Activated B cell treated with CpG ODN at 0.5 μM for 24 hours (primary cell): ENCODE measurements at regions of chr6 and their contacts with region 1.

Region 1: DNA sequence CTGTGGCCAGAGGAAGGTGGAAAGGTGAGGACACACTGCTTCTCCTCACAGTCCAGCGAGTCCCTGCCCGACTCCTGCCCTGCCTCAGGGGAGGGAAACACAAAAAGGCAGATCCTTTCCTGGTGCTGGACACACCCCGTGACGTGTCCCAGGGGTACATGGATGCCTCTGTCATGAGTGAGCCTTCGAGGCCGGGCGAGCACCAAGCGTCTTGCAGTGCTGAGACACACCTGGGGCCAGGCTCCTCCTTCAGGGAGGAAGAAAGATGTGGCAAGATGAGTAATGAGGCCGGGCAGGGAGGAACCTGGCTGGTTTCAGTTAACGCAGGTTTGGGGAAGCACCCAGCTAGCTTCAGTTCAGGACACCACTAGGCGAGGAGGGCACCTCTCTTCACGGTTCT is 215.1 kb downstream of the LY86 start:
- DNase-seq: peak; percentile 56
- ATAC-seq: peak; percentile 85
- H3K4me3 Mint-ChIP-seq: peak overlapping the region; percentile 4
- H3K27ac Mint-ChIP-seq: peak overlapping the region; percentile 42
- H3K4me1 Mint-ChIP-seq: peaks cover 79% of the 10 kb centered on the region
- H3K27me3 Mint-ChIP-seq: no peaks in the 10 kb centered on the region
- CTCF ChIP-seq: no peak

Region 2: DNA sequence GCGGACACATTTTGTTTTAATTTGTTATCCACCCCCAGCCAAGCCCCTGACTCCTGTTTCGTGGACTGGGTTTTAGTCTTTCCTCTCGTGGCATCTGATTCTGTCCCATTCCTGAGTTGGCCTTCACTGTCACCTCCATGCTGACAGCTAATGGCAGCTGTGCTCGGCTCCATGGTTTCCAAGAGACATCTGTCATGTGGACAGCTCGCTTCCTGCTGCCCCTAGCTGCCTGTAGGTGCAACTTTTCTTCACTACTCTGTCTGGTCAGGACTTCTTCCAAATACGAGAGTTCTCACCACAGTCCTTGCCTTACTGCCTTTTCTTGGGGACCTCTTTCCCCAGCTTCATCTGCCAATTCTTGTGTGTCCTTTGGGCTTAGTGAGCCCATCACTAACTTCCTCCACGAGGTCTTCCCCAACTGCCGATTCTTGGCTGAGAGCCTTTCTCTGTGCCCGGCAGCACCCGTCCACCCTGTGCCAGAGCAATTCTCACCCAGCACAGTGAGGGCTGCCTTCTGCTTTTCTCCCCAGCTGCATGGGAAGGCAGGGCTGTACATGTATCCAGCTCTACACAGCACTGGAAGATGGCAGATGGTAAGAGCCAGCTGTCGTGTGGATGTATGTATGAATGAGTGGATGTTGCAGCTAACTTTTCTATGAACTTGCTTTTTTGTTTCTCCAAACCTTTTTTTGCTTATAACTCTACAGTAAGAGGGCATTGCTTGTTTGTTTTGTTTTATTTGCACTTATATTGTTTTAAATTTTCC is 623.5 kb before region 1 on chr6:
- CTCF ChIA-PET with region 1: no interaction called
- POLR2A ChIA-PET with region 1: no interaction called
- intact Hi-C with region 1: no loop called
- DNase-seq: no peak
- ATAC-seq: no peak
- H3K4me3 Mint-ChIP-seq: no peak overlapping the region
- H3K27ac Mint-ChIP-seq: no peak overlapping the region
- H3K4me1 Mint-ChIP-seq: no peaks in the 10 kb centered on the region
- H3K27me3 Mint-ChIP-seq: peaks cover 23% of the 10 kb centered on the region
- CTCF ChIP-seq: no peak

Region 3: DNA sequence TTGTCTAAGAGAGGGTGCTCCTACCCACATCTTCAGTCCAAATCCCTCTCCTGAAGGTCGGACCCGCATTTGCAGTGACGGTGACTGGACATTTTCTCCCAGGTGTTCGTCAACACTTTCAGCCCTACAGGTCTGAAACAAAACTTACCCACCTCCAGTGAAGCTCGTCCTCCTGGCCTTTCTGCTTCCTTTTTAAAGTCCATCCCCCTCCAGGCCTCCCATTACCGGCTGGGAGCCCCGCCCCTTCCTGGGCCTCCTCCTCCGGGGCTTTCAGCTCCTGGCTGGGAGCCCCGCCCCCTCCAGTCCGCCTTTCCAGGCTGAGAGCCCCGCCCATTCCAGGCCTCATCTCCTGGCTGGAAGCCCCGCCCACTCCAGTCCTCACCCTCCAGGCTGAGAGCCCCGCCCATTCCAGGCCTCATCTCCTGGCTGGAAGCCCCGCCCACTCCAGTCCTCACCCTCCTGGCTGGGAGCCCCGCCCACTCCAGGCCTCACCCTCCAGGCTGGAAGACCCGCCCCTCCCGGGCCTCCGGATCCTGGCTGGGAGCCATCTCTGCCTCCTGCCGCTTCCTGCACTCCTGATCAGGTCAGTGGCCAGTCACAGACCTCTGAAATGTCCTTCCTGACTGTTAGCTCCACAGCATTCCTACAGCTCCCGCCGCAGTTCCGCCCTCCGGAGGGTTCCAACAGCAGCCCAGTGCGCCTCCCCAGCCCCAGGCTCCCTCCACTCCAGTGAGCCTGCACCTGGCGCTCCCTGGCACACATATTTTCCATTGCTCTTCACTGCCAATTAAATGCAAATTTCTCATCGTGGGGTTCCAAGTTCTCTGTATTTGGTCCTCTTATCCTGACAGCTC is 116.6 kb before region 1 on chr6:
- CTCF ChIA-PET with region 1: no interaction called
- POLR2A ChIA-PET with region 1: no interaction called
- intact Hi-C with region 1: no loop called
- DNase-seq: no peak
- ATAC-seq: peak; percentile 19
- H3K4me3 Mint-ChIP-seq: no peak overlapping the region
- H3K27ac Mint-ChIP-seq: no peak overlapping the region
- H3K4me1 Mint-ChIP-seq: peaks cover 16% of the 10 kb centered on the region
- H3K27me3 Mint-ChIP-seq: no peaks in the 10 kb centered on the region
- CTCF ChIP-seq: no peak

Region 4: GRCh38 chr6:6758915-6759654 is 44.5 kb before region 1 on chr6:
- CTCF ChIA-PET with region 1: interaction called, 6 read pairs
- POLR2A ChIA-PET with region 1: no interaction called
- intact Hi-C with region 1: loop called (anchors 1 kb)
- DNase-seq: peak; percentile 22
- ATAC-seq: peak; percentile 88
- H3K4me3 Mint-ChIP-seq: no peak overlapping the region
- H3K27ac Mint-ChIP-seq: no peak overlapping the region
- H3K4me1 Mint-ChIP-seq: peaks cover 21% of the 10 kb centered on the region
- H3K27me3 Mint-ChIP-seq: peaks cover 9% of the 10 kb centered on the region
- CTCF ChIP-seq: no peak

Region 5: DNA sequence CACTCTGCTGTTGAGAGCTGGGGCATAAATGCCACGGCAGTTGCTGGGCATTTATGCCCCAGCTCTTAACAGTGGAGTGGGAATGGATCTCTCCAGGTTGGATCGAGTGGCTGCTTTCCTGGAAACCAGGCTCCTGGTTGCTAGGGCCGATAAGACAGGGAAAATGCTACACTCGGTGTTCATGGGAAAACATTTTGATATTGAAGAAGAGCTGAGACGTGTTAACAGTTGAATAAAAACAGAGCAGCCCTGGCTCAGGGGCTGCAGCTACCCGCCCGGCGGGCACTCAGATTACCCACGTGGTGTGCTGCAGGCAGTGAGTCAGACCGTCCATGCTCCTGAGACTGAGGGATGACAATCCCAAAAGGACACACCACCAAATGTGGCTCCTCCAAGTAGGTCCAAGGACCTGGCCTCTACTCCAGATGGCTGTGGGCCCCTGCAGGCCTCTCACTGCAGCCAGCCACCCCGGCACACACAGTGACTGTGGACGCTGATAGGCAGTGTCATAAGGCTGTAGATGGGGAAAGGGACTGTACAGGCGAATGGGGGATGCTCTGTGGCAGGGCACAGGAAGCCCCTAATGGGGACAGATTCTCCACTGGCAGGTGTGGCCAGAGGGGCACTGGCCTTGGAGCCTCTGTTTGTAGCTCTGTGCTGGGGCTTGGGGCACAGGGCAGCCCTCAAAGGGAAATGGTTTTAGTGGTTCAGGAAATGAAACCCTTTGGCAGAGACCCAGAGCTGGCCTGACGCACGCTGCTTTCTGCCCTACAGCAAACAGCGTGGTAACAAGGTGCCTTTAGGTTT is 22.7 kb after region 1 on chr6:
- CTCF ChIA-PET with region 1: no interaction called
- POLR2A ChIA-PET with region 1: no interaction called
- intact Hi-C with region 1: loop called (anchors 1 kb)
- DNase-seq: peak; percentile 35
- ATAC-seq: peak; percentile 95
- H3K4me3 Mint-ChIP-seq: no peak overlapping the region
- H3K27ac Mint-ChIP-seq: peak overlapping the region; percentile 59
- H3K4me1 Mint-ChIP-seq: peaks cover 31% of the 10 kb centered on the region
- H3K27me3 Mint-ChIP-seq: peaks cover 12% of the 10 kb centered on the region
- CTCF ChIP-seq: no peak

Region 6: DNA sequence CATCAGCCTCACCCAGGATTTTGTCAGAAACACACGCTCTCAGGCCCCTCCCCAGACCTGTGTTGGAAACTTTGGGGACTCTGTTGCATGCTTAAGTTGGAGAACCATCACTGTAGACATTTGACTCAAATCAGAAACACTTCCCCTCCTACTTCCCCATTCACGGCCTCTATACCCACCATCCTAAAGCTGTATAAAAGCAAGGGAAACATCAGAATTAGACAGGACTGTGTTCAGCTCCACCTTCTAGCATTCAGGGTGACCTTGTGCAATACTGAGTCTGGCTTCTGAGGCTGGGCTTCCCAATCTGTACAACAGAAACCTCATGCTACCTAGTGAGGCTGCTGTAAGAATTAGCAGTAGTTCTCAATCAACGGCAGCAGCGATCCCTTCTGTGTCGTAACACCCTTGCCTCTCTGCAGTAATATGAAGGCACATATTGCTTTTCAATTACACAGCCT is 37.3 kb after region 1 on chr6:
- CTCF ChIA-PET with region 1: no interaction called
- POLR2A ChIA-PET with region 1: no interaction called
- intact Hi-C with region 1: loop called (anchors 5 kb)
- DNase-seq: no peak
- ATAC-seq: peak; percentile 89
- H3K4me3 Mint-ChIP-seq: no peak overlapping the region
- H3K27ac Mint-ChIP-seq: no peak overlapping the region
- H3K4me1 Mint-ChIP-seq: peaks cover 11% of the 10 kb centered on the region
- H3K27me3 Mint-ChIP-seq: peaks cover 4% of the 10 kb centered on the region
- CTCF ChIP-seq: no peak

Region 7: GRCh38 chr6:7051233-7052114 is 247.9 kb after region 1 on chr6:
- CTCF ChIA-PET with region 1: no interaction called
- POLR2A ChIA-PET with region 1: interaction called, 3 read pairs
- intact Hi-C with region 1: loop called (anchors 5 kb)
- DNase-seq: peak; percentile 61
- ATAC-seq: peak; percentile 86
- H3K4me3 Mint-ChIP-seq: peak overlapping the region; percentile 76
- H3K27ac Mint-ChIP-seq: peak overlapping the region; percentile 56
- H3K4me1 Mint-ChIP-seq: peaks cover 38% of the 10 kb centered on the region
- H3K27me3 Mint-ChIP-seq: no peaks in the 10 kb centered on the region
- CTCF ChIP-seq: no peak

Region 8: GRCh38 chr6:7201688-7202541 is 398.3 kb after region 1 on chr6:
- CTCF ChIA-PET with region 1: no interaction called
- POLR2A ChIA-PET with region 1: no interaction called
- intact Hi-C with region 1: loop called (anchors 5 kb)
- DNase-seq: peak; percentile 65
- ATAC-seq: peak; percentile 94
- H3K4me3 Mint-ChIP-seq: peak overlapping the region; percentile 50
- H3K27ac Mint-ChIP-seq: peak overlapping the region; percentile 74
- H3K4me1 Mint-ChIP-seq: peaks cover 56% of the 10 kb centered on the region
- H3K27me3 Mint-ChIP-seq: no peaks in the 10 kb centered on the region
- CTCF ChIP-seq: no peak